ENCODE measurements at regions of chr15 and their contacts with region 1.

Region 1: GRCh38 chr15:81106560-81106959 is 27.5 kb upstream of the CFAP161 start:
- DNase-seq: peak; percentile 16
- H3K4me3 ChIP-seq: no peak overlapping the region
- H3K27me3 ChIP-seq: peaks cover 4% of the 10 kb centered on the region; the same call in 1 of the 2 replicates
- CTCF ChIP-seq: peak; percentile 72

Region 2: GRCh38 chr15:80811781-80812315 is 294.7 kb before region 1 on chr15:
- CTCF ChIA-PET with region 1: no interaction called
- POLR2A ChIA-PET with region 1: no interaction called
- DNase-seq: no peak
- H3K4me3 ChIP-seq: no peak overlapping the region
- H3K27me3 ChIP-seq: no peaks in the 10 kb centered on the region
- CTCF ChIP-seq: no peak

Region 3: GRCh38 chr15:80823995-80824394 is 282.6 kb before region 1 on chr15:
- CTCF ChIA-PET with region 1: no interaction called
- POLR2A ChIA-PET with region 1: no interaction called
- DNase-seq: no peak
- H3K4me3 ChIP-seq: no peak overlapping the region
- H3K27me3 ChIP-seq: no peaks in the 10 kb centered on the region
- CTCF ChIP-seq: no peak

Region 4: DNA sequence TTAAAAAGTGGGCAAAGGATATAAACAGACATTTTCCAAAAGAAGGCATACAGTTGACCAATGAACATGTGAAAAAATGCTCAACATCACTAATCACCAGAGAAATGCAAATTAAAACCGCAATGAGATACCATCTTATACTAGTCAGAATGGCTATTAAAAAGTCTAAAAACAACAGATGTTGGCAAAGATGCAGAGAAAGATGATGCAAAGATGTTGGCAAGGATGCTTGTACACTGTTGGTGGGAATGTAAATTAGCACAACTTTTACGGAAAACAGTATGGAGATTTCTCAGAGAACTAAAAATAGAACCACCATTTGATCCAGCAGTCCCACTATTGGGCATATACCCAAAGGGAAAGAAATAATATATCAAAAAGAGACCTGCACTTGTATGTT is 52.3 kb before region 1 on chr15:
- CTCF ChIA-PET with region 1: no interaction called
- POLR2A ChIA-PET with region 1: no interaction called
- DNase-seq: peak; percentile 79
- H3K4me3 ChIP-seq: no peak overlapping the region
- H3K27me3 ChIP-seq: no peaks in the 10 kb centered on the region
- CTCF ChIP-seq: no peak

Region 5: DNA sequence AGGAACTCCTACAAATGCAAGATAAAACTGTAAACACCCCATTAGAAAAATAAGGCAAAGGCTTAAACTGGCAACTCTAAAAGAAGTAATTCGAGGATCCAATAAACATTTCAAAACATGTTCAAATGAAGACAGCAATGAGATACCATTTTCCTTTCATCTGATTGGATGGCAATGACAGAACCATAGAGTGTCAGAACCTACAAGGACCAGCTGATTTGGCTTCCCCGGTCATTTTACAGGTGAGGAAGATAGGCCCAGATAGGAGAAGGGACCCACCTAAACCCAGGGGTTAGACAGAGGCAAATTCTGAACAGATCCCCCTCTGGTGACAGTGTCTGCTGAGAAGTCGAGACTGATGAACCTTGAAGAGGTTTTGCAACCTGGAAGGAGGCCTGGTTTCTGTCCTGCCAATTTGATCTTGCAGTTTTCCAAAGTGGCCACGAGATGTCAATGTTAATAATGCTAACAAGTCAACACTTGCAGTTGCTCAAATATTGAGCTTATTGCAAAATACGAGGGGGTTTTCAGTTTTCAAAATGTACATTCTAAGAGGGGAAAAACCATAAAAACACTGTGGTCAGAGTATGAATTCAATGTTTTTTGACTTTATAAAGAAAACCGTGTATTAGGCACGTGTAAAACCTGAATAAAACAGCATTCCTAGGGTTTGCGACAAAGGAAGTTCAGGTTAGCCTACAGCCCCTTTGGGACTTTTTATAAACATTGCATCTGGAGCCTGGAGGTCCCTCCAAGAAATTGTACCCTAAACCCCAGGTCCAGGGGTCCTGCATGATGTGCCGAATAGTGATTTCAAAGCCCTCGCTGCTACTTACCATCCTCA is 49.0 kb after region 1 on chr15:
- CTCF ChIA-PET with region 1: interaction called, 14 read pairs
- POLR2A ChIA-PET with region 1: no interaction called
- DNase-seq: no peak
- H3K4me3 ChIP-seq: no peak overlapping the region
- H3K27me3 ChIP-seq: no peaks in the 10 kb centered on the region; the same call in 1 of the 2 replicates
- CTCF ChIP-seq: peak; percentile 49

Region 6: GRCh38 chr15:81163961-81164800 is 57.6 kb after region 1 on chr15:
- CTCF ChIA-PET with region 1: interaction called, 11 read pairs
- POLR2A ChIA-PET with region 1: no interaction called
- DNase-seq: peak; percentile 25
- H3K4me3 ChIP-seq: no peak overlapping the region
- H3K27me3 ChIP-seq: no peaks in the 10 kb centered on the region
- CTCF ChIP-seq: peak; percentile 33; the same call in 1 of the 2 replicates

Region 7: DNA sequence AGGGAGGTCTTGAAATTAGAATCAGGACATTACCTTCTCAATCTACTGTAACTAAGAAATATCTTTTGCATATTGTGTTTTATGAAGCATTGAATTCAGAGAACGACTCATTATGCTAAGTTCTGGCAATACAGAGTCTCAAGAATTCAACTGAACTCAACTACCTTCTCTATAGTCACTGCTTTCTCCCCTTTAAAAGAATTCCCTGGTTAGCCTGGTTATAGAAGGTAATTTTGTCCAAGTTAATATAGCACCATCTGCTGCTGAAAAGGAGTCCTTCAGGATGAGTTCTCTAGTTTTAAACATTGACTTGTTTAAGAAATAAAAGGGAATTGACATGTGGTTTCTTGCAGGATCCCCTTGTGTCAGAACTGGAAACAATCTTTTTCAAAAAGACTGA is 150.4 kb after region 1 on chr15:
- CTCF ChIA-PET with region 1: interaction called, 43 read pairs
- POLR2A ChIA-PET with region 1: no interaction called
- DNase-seq: no peak
- H3K4me3 ChIP-seq: no peak overlapping the region
- H3K27me3 ChIP-seq: peaks cover 3% of the 10 kb centered on the region
- CTCF ChIP-seq: peak; percentile 62

Measured in BJ (cell line).